Right cardiac atrium (tissue), 5 donors: ENCODE measurements at regions of chr17 and their contacts with region 1.

Region 1: DNA sequence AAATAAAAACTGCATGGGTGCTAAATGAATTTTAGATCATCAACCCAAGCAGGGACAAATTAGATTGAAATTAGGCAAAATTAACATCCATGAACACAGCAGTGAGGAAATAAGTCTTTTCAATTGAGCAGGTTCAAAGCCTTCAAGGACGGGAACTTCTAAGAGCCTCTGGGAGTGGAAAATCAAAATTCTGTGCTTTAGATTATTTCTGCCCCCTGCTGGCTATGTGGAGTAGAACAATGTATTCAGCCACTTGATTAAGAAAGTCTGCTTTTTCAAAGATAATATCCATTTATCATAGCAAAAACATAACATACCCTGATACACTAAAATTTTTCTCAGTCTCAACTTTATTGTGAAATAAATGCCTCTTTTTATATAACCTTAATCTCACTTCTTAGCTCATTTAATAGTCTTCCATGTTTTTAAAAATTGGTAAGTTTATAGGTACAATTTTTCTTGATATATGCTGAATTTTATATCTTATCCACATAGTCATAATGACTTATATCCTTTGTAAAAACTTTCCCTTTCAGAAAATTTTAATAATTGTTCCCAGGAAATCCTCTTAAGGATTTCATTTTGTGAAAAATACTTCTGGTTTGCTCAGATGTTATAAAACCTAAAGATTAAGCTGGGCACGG is 28.1 kb upstream of the NOL11 start:
- DNase-seq: no peak
- ATAC-seq: peak in 1 of 2 donors; percentile 74
- H3K4me3 ChIP-seq: no peak overlapping the region
- H3K27ac ChIP-seq: no peak overlapping the region
- H3K4me1 ChIP-seq: no peaks in the 10 kb centered on the region
- H3K27me3 ChIP-seq: no peaks in the 10 kb centered on the region

Region 2: DNA sequence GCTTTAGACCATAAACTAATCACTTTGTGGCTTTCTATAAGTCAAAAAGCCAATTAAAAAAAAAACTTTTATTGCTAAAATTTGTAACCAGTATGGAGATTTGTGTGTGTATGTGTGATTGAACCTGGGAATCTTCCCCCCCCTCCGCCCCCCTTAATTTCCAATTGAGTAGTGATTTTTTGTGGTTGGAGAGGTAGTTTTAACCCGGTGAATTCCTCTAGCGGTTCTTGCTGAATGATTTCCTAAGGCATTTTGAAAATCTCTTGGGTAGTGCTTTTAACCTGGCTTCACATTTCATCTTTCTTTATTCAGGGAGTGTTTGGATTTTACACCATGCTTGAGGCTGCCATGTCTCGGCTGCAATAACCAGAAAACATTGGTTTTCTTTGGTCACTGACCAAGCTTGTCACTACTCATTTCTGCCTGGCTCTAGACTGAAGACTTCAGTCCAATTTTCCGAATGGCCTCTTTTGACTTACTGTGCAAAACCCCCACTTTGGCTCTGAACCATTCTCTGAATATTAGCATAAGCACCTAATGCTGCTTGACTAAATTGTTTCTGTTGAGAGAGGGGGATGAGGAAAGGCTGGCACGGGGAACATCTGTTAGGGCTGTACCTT is 1351.7 kb before region 1 on chr17:
- intact Hi-C with region 1: no loop called
- DNase-seq: no peak
- ATAC-seq: peak; percentile 73 to 85
- H3K4me3 ChIP-seq: no peak overlapping the region
- H3K27ac ChIP-seq: no peak overlapping the region
- H3K4me1 ChIP-seq: peaks cover 5% of the 10 kb centered on the region
- H3K27me3 ChIP-seq: no peaks in the 10 kb centered on the region

Region 3: DNA sequence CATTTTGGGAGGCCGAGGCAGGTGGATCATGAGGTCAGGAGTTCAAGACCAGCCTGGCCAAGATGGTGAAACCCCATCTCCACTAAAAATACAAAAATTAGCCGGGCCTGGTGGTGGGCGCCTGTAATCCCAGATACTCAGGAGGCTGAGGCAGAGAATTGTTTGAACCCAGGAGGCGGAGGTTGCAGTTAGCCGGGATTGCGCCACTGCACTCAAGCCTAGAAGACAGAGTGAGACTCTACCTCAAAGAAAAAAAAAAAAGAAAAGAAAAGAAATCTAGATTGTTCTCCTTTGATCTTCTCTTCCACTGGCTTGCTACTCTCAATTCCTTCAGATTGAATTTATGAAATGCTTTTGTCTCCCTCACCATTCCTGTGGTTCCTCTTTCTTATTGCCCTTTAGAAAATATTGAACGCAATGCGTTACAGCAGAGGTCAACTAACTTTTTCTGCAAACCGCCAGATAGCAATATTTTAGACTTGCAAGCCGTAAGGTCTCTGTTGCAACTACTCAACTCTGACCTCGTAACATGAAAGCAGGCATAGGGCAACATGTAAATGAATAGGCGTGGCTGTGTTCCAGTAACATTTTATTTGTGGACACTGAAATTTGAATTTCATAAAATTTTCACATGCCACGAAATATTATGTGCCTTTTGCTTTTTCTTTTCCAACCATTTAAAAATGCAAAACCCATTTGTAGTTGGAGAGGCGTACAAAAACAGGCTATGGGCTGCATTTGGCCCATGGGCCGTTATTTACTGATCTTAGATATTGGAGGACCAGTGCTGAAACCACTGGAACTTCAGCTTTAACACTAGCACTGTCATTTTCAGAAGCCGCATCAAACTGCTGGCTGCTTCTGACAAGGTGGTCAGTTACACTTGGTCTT is 287.8 kb before region 1 on chr17:
- intact Hi-C with region 1: no loop called
- DNase-seq: no peak
- ATAC-seq: no peak
- H3K4me3 ChIP-seq: no peak overlapping the region
- H3K27ac ChIP-seq: no peak overlapping the region
- H3K4me1 ChIP-seq: peaks cover 3% of the 10 kb centered on the region
- H3K27me3 ChIP-seq: no peaks in the 10 kb centered on the region

Region 4: DNA sequence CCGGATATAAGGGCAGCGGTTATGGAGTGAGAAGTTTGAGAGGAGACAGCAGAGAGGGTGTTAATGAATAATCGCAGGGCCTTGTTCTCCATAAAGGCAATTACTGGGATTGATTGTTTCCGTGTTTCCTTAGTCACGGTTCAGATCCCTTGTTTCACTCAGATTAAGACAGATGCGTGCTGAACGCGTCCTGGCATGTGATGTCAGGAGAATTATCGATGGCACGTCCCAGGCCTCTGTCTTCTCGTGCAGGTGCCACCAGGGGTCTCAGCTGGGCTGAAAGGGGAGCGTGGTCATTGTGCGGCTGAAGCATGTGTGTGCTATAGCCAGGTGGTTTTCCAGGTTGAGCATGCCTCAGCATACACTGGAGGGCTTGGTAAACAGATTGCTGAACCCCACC is 114.3 kb before region 1 on chr17:
- intact Hi-C with region 1: no loop called
- DNase-seq: no peak
- ATAC-seq: no peak
- H3K4me3 ChIP-seq: no peak overlapping the region
- H3K27ac ChIP-seq: no peak overlapping the region
- H3K4me1 ChIP-seq: no peaks in the 10 kb centered on the region
- H3K27me3 ChIP-seq: no peaks in the 10 kb centered on the region

Region 5: GRCh38 chr17:67629971-67630320 is 59.7 kb before region 1 on chr17:
- intact Hi-C with region 1: loop called in 1 of 4 experiments (anchors 10 kb)
- DNase-seq: no peak
- ATAC-seq: peak; percentile 25 to 45
- H3K4me3 ChIP-seq: no peak overlapping the region
- H3K27ac ChIP-seq: no peak overlapping the region
- H3K4me1 ChIP-seq: peaks cover 3% of the 10 kb centered on the region
- H3K27me3 ChIP-seq: no peaks in the 10 kb centered on the region